ENCODE measurements at regions of chr7 and their contacts with region 1.

Region 1: GRCh38 chr7:133461421-133461820 is 208.5 kb downstream of the EXOC4 start:
- DNase-seq: no peak
- H3K4me3 Mint-ChIP-seq: peak overlapping the region; percentile 58
- H3K27ac Mint-ChIP-seq: peak overlapping the region; percentile 76
- H3K4me1 Mint-ChIP-seq: peaks cover 33% of the 10 kb centered on the region
- H3K27me3 Mint-ChIP-seq: no peaks in the 10 kb centered on the region

Region 2: GRCh38 chr7:133481676-133482075 is 20.3 kb after region 1 on chr7:
- intact Hi-C with region 1: loop called (anchors 1 kb)
- DNase-seq: no peak
- H3K4me3 Mint-ChIP-seq: peak overlapping the region; percentile 59
- H3K27ac Mint-ChIP-seq: peak overlapping the region; percentile 78
- H3K4me1 Mint-ChIP-seq: peaks cover 69% of the 10 kb centered on the region
- H3K27me3 Mint-ChIP-seq: no peaks in the 10 kb centered on the region